Gastrocnemius medialis (tissue), 4 donors: ENCODE measurements at regions of chr19 and their contacts with region 1.

Region 1: DNA sequence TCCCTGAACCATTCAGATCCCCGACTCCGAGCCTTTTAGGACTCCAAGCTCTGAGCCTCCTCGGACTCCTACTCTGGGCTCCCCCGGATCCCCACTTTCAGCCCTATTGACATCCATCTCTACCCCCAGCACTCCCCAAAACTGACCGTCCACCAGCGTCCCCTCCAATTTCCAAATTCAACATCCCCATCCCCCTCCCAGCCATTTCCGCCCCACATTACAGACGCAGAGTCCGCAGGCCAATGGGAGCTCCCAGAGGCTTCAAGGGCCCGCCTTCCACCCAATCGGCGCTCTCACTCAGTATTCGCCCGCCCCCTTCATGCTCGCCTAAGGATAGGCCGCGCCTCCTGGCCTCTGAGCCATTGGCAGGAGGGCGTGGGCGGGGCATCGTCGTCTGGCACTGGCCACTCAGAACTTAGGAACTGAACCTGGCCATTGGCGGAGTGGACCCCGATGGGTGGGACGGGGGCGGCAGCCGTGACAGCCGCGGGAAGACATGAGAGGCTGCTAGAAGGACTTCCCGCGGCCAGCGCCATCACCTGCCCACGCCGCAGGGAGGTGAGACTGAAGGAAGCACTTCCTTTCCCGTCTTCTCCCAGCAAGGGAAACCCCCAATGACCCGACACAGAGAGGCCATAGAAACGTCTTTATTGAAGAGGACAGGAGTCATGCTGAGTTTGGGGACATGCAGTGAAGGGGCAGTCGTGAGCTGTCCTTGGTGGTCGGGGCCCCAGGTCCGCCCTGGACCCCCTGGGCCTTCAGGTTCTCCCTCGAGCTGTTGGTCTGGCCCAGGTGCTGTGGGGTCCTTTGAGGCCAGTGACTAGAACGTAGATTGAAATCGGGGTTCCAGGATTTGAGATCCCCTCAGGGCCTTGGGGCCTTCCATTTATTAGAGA is at the start of gene ALKBH6:
- DNase-seq: peak; percentile 99 to 100
- ATAC-seq: peak; percentile 98 to 99
- H3K4me3 ChIP-seq: peak within 1 kb of the TSS; percentile 71 to 95 (median 88)
- H3K27ac ChIP-seq: peak within 1 kb of the TSS; percentile 83 to 89 (median 86)
- H3K4me1 ChIP-seq: peaks cover 5 to 16% of the 10 kb centered on the region in 2 donors
- H3K27me3 ChIP-seq: peaks cover 0 to 5% (median 0%) of the 10 kb centered on the region in 3 donors
- CTCF ChIP-seq: peak in 1 of 5 experiments; percentile 16
- POLR2A ChIP-seq: peak in 1 of 2 donors; percentile 16
- total RNA-seq, gene ALKBH6: 10.6 to 50.1 (median 19.0) TPM

Region 2: DNA sequence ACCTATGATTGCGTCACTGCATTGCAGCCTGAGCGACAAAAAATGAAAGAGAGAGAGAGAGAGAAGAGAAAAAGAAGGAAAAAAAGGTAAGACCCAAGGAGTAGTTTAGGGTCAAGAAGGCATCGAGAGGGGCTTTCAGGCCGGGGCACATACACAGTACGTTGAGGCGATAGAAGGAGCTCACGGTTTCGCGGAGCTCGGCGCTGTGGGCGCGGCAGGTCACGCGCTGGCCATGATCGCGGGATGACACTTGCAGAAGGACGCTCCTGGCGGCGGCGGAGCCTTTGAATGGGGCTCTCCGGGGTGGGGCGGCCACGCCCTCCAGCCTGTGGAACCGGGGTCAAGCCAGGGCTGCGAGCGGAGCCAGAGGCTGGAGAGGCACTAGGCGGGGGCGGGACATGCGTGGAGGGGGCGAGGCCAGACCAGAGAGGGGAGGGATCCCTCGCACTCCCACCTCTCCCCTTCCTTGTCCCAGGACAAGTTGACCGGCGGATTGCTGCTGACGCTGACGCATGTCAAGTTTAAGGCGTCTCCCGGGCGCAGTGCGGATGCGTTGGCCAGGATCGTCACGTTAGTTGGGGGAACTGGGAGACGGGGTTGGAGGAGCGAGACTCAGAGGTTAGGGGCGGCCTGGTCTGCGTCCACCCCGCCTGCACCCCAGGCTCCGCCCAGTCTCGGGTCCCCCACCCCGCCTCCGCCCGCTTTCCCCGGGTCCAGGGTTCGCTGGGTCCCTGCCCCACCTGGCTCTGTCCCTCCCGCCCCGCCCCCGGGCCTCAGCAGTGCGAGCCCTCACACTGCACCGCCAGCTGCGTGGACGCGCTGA is 168.9 kb before region 1 on chr19:
- in situ Hi-C with region 1: no loop called
- intact Hi-C with region 1: no loop called
- DNase-seq: no peak
- ATAC-seq: no peak
- H3K4me3 ChIP-seq: peak overlapping the region in 2 of 4 donors; percentile 3 to 31
- H3K27ac ChIP-seq: no peak overlapping the region
- H3K4me1 ChIP-seq: peaks cover 0 to 3% of the 10 kb centered on the region in 2 donors
- H3K27me3 ChIP-seq: peaks cover 63 to 67% (median 66%) of the 10 kb centered on the region in 3 donors
- CTCF ChIP-seq: no peak
- POLR2A ChIP-seq: no peak

Region 3: GRCh38 chr19:36054119-36054732 is 39.9 kb after region 1 on chr19 and contains the start of gene THAP8:
- in situ Hi-C with region 1: no loop called
- intact Hi-C with region 1: loop called (anchors 1 kb)
- DNase-seq: peak; percentile 100
- ATAC-seq: peak; percentile 92 to 95
- H3K4me3 ChIP-seq: peak within 1 kb of the TSS; percentile 67 to 93 (median 83)
- H3K27ac ChIP-seq: peak within 1 kb of the TSS; percentile 87 to 99 (median 96)
- H3K4me1 ChIP-seq: peaks cover 12 to 13% of the 10 kb centered on the region in 2 donors
- H3K27me3 ChIP-seq: no peaks in the 10 kb centered on the region
- CTCF ChIP-seq: peak; percentile 50 to 58 (median 54)
- POLR2A ChIP-seq: peak; percentile 65 to 72
- total RNA-seq, gene THAP8: 6.1 to 10.5 (median 6.1) TPM